ENCODE measurements at regions of chr6 and their contacts with region 1.

Region 1: GRCh38 chr6:138973466-138974153 is 14.4 kb downstream of the REPS1 start:
- DNase-seq: no peak
- H3K4me3 ChIP-seq: no peak overlapping the region
- H3K27ac ChIP-seq: no peak overlapping the region
- H3K4me1 ChIP-seq: peaks cover 3 to 23% (median 13%) of the 10 kb centered on the region in 4 experiments; a peak in 5 of 7 replicates
- H3K27me3 ChIP-seq: no peaks in the 10 kb centered on the region
- CTCF ChIP-seq: no peak
- EP300 ChIP-seq: no peak
- POLR2A ChIP-seq: no peak
- RAD21 ChIP-seq: no peak

Region 2: DNA sequence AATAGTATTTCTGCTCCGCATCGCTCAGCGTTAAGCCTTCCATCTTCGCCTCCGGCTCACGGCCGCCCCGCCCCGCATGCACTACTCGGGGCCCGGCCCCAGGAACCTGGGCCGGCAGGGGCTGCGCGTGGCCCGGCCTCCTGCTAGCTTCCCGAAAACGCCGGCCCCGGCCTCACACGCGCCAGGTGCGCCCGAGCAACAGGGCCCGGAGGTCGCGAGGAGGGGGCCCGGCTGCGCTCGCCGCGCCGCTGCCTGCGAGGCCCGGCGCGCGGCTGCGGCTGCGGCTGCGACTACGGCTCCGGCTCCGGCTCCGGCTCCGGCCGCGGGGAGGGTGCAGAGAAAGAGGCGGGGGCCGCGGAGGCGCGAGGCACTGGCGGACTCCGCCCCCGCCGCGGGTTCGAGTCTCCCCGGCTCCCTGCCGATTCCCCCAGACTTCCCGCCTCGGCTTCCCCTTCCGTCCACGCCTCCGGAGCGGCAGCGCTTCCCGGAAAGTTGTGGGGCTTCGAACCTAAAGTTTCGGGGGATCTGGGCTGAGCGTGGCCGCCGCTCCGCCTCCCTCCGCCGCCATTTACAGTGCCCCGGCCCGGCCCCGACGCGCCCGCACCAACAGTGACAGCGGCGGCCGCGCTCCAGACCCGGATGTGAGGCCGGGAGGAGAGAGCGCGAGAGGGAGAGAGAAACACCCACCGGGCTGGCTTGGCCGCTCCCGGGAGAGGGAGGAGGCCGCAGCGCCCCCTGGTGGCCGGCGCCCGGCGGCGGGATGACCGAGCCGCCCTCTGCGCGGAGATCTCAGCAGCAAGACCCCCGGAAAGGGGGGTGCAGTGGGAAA is 14.2 kb after region 1 on chr6 and contains the start of gene REPS1:
- CTCF ChIA-PET with region 1: interaction called, 6 read pairs
- POLR2A ChIA-PET with region 1: interaction called, 20 read pairs
- DNase-seq: peak; percentile 73 to 98
- H3K4me3 ChIP-seq: peak within 1 kb of the TSS; percentile 77 to 97 (median 82)
- H3K27ac ChIP-seq: peak within 1 kb of the TSS; percentile 75; the same call in 1 of the 2 replicates
- H3K4me1 ChIP-seq: peaks cover 3 to 6% (median 6%) of the 10 kb centered on the region in 4 experiments; a peak in 4 of 7 replicates
- H3K27me3 ChIP-seq: no peaks in the 10 kb centered on the region
- CTCF ChIP-seq: peak; percentile 83 to 88 (median 84)
- EP300 ChIP-seq: no peak
- POLR2A ChIP-seq: peak; percentile 23 to 71
- RAD21 ChIP-seq: peak; percentile 68 to 77
- total RNA-seq, gene REPS1: 65.7 and 68.9 TPM in 2 replicates

Region 3: GRCh38 chr6:139050770-139051313 is 77.2 kb after region 1 on chr6:
- CTCF ChIA-PET with region 1: no interaction called
- POLR2A ChIA-PET with region 1: no interaction called
- DNase-seq: no peak
- H3K4me3 ChIP-seq: no peak overlapping the region
- H3K27ac ChIP-seq: no peak overlapping the region
- H3K4me1 ChIP-seq: no peaks in the 10 kb centered on the region
- H3K27me3 ChIP-seq: no peaks in the 10 kb centered on the region
- CTCF ChIP-seq: no peak
- EP300 ChIP-seq: no peak
- POLR2A ChIP-seq: no peak
- RAD21 ChIP-seq: peak in 1 of 2 experiments; percentile 19; a peak in 1 of 4 replicates